ENCODE measurements at regions of chr17 and their contacts with region 1.

Region 1: GRCh38 chr17:36072431-36073121 is 8.5 kb downstream of the CCL18 start:
- DNase-seq: peak; percentile 90
- H3K4me3 Mint-ChIP-seq: no peak overlapping the region
- H3K27ac Mint-ChIP-seq: peak overlapping the region; percentile 24
- H3K4me1 Mint-ChIP-seq: peaks cover 28% of the 10 kb centered on the region
- H3K27me3 Mint-ChIP-seq: peaks cover 7% of the 10 kb centered on the region

Region 2: DNA sequence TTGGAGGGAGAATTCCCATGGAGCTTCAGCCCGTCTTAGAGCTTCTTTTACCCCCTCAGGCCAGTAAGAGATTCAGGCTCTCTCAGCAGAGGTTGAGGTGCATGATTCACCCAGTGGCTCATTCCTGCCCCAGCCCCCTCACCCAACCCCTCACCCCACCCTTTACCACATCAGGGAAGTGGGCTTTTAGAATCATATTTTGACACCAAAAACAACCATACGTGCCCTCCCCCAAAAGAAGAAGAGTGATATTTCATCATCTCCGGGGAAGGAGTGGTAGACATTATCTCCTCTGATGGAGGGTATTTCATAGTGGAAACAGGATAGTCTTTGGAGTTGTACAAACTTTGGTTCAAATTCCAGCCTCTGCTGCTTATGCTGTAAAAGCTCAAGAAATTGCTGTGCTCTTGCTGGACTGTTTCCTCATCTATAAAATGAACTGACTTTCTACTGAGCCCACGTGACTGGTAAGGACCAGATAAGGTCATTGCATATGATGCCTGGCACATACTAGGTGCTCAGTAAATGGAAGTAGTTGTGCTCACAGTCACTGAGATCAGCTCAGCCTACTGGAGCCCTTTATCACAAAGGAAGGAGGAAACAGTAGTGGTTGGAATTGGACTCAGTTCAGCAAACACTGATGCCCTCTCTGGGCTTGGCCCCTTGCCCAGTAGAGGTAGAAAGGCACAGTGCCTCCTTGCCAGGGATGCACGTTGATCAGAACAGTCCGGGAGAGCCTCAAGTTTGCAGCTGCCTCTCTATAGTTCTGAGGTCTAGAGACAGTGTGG is 174.1 kb before region 1 on chr17:
- CTCF ChIA-PET with region 1: interaction called, 3 read pairs
- POLR2A ChIA-PET with region 1: interaction called, 3 read pairs
- intact Hi-C with region 1: loop called (anchors 5 kb)
- DNase-seq: peak; percentile 77
- H3K4me3 Mint-ChIP-seq: peak overlapping the region; percentile 46
- H3K27ac Mint-ChIP-seq: peak overlapping the region; percentile 78
- H3K4me1 Mint-ChIP-seq: peaks cover 39% of the 10 kb centered on the region
- H3K27me3 Mint-ChIP-seq: no peaks in the 10 kb centered on the region

Region 3: GRCh38 chr17:35981908-35982330 is 90.7 kb before region 1 on chr17:
- CTCF ChIA-PET with region 1: interaction called, 9 read pairs
- POLR2A ChIA-PET with region 1: no interaction called
- intact Hi-C with region 1: loop called (anchors 2 kb)
- DNase-seq: peak; percentile 20
- H3K4me3 Mint-ChIP-seq: no peak overlapping the region
- H3K27ac Mint-ChIP-seq: no peak overlapping the region
- H3K4me1 Mint-ChIP-seq: no peaks in the 10 kb centered on the region
- H3K27me3 Mint-ChIP-seq: peaks cover 5% of the 10 kb centered on the region

Region 4: GRCh38 chr17:36089888-36090836 is 17.6 kb after region 1 on chr17 and contains the start of gene CCL3:
- CTCF ChIA-PET with region 1: interaction called, 56 read pairs
- POLR2A ChIA-PET with region 1: interaction called, 20 read pairs
- intact Hi-C with region 1: loop called (anchors 1 kb)
- DNase-seq: peak; percentile 79
- H3K4me3 Mint-ChIP-seq: peak within 1 kb of the TSS; percentile 64
- H3K27ac Mint-ChIP-seq: peak within 1 kb of the TSS; percentile 74
- H3K4me1 Mint-ChIP-seq: peaks cover 56% of the 10 kb centered on the region
- H3K27me3 Mint-ChIP-seq: peaks cover 26% of the 10 kb centered on the region
- total RNA-seq, gene CCL3: 981 to 989 TPM

Region 5: GRCh38 chr17:36117505-36118382 is 45.2 kb after region 1 on chr17:
- CTCF ChIA-PET with region 1: interaction called, 51 read pairs
- POLR2A ChIA-PET with region 1: interaction called, 4 read pairs
- intact Hi-C with region 1: loop called (anchors 1 kb)
- DNase-seq: peak; percentile 80
- H3K4me3 Mint-ChIP-seq: no peak overlapping the region
- H3K27ac Mint-ChIP-seq: peak overlapping the region; percentile 40
- H3K4me1 Mint-ChIP-seq: peaks cover 35% of the 10 kb centered on the region
- H3K27me3 Mint-ChIP-seq: peaks cover 27% of the 10 kb centered on the region

Measured in activated CD4-positive, alpha-beta memory T cell treated with anti-CD3 and anti-CD28 coated beads for 36 hours (primary cell).